MCF 10A (cell line): ENCODE measurements at regions of chr5 and their contacts with region 1.

Region 1: GRCh38 chr5:116947691-116948528 is 373.3 kb upstream of the SEMA6A start:
- DNase-seq: peak; percentile 84
- H3K4me3 Mint-ChIP-seq: no peak overlapping the region
- H3K27ac Mint-ChIP-seq: no peak overlapping the region
- H3K4me1 Mint-ChIP-seq: peaks cover 9% of the 10 kb centered on the region
- H3K27me3 Mint-ChIP-seq: no peaks in the 10 kb centered on the region
- CTCF ChIP-seq: peak; percentile 54

Region 2: DNA sequence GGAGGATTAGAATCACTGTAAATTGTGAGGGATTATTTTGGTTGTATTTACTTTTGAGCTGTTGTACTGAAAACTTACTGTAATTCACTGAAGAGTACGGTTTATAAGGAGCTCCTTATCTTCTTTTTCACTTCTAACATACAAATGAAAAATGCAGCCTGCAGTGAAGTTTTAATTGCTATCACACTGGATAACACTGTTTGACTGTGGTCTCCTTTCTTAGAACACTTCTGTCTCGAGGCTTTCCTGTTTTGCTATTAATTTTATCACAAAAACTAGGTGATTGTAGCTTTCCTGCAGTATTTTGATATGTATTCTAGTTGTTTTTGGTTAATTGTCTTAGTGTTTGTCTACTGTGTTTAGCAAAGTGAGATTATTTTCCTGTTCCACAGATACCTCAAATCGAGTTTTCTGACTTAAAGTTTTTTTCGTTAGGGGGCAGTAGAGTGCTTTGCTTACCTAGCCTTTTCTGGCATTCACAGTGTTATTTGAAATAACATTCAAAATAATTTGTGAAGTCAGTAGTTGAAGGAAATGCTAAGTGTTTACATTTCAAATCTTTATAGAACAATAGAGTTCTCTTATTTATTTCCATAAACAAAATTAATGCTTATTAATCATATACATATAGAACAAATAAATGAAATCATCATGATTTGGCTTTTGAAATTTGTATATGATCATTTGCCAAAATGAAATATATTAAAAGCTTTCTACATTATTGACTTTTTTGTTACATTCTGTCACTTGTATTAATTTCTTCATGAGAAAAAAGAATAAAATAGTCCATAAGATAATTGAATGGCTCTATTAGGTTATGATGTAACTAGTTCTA is 810.1 kb before region 1 on chr5:
- CTCF ChIA-PET with region 1: no interaction called
- POLR2A ChIA-PET with region 1: interaction called, 3 read pairs
- intact Hi-C with region 1: loop called (anchors 5 kb)
- DNase-seq: peak; percentile 57
- H3K4me3 Mint-ChIP-seq: no peak overlapping the region
- H3K27ac Mint-ChIP-seq: no peak overlapping the region
- H3K4me1 Mint-ChIP-seq: no peaks in the 10 kb centered on the region
- H3K27me3 Mint-ChIP-seq: no peaks in the 10 kb centered on the region
- CTCF ChIP-seq: peak; percentile 68

Region 3: GRCh38 chr5:116574367-116575325 is 373.3 kb before region 1 on chr5 and contains the start of gene SEMA6A:
- CTCF ChIA-PET with region 1: interaction called, 4 read pairs
- POLR2A ChIA-PET with region 1: no interaction called
- intact Hi-C with region 1: loop called (anchors 1 kb)
- DNase-seq: peak; percentile 94
- H3K4me3 Mint-ChIP-seq: peak within 1 kb of the TSS; percentile 93
- H3K27ac Mint-ChIP-seq: peak within 1 kb of the TSS; percentile 37
- H3K4me1 Mint-ChIP-seq: peaks cover 5% of the 10 kb centered on the region
- H3K27me3 Mint-ChIP-seq: no peaks in the 10 kb centered on the region
- CTCF ChIP-seq: peak; percentile 12
- total RNA-seq, gene SEMA6A: 1.5 and 2.1 TPM in 2 replicates

Region 4: DNA sequence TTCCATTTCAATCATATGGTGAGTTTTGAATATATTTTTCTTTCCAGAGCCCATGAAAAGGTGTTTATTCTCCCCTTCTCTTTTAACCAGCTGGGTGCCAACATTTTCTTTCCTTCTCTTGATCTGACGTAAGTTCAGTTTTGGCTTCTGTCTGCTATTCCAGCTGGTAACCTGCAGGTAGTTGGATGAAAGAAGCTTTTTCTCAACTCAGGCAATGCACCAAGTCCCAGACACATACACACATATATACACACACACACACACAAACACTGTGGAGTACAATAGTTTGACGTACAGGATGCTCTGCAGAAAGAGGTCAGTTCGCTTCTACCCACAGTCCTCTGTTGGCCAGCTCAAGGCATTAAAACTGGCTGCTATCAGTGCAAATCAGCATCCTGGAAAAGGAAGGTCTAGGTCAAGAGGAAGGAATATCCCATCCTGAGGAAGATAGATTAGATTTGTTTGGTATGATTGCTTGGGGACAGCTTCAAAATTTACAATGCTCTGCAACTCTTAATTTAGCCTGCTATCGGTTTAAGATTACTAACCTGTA is 159.0 kb before region 1 on chr5:
- CTCF ChIA-PET with region 1: no interaction called
- POLR2A ChIA-PET with region 1: no interaction called
- intact Hi-C with region 1: no loop called
- DNase-seq: no peak
- H3K4me3 Mint-ChIP-seq: no peak overlapping the region
- H3K27ac Mint-ChIP-seq: no peak overlapping the region
- H3K4me1 Mint-ChIP-seq: peaks cover 5% of the 10 kb centered on the region
- H3K27me3 Mint-ChIP-seq: no peaks in the 10 kb centered on the region
- CTCF ChIP-seq: no peak

Region 5: DNA sequence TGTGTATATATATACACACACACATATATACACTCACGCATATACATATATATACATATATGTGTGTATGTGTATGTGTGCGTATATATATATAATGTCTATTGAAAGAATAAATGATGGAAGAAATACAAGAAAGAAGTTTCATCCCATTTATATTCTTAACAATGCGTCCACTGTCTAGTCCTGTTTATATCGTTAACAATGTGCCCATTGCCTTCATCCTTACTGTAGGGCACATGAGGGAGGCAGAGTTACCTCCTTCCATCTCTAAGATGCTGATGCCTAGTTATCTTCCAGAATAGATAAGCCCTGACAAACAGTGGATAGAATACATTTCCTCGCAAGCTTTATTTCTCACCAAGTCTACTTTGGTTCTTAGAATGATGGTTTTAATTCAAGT is 16.5 kb after region 1 on chr5:
- CTCF ChIA-PET with region 1: no interaction called
- POLR2A ChIA-PET with region 1: no interaction called
- intact Hi-C with region 1: no loop called
- DNase-seq: no peak
- H3K4me3 Mint-ChIP-seq: no peak overlapping the region
- H3K27ac Mint-ChIP-seq: no peak overlapping the region
- H3K4me1 Mint-ChIP-seq: no peaks in the 10 kb centered on the region
- H3K27me3 Mint-ChIP-seq: no peaks in the 10 kb centered on the region
- CTCF ChIP-seq: no peak